Right cardiac atrium (tissue), 5 donors: ENCODE measurements at regions of chr7 and their contacts with region 1.

Region 1: GRCh38 chr7:127253281-127254162 is 781 bp upstream of the GRM8 start:
- DNase-seq: peak; percentile 60 to 88 (median 83)
- ATAC-seq: peak; percentile 91 to 92
- H3K4me3 ChIP-seq: peak overlapping the region; percentile 64
- H3K27ac ChIP-seq: no peak overlapping the region
- H3K4me1 ChIP-seq: no peaks in the 10 kb centered on the region
- H3K27me3 ChIP-seq: no peaks in the 10 kb centered on the region

Region 2: GRCh38 chr7:126803060-126803665 is 450.4 kb before region 1 on chr7:
- intact Hi-C with region 1: loop called in 1 of 4 experiments (anchors 10 kb)
- DNase-seq: peak in 2 of 3 donors; percentile 9 to 14
- ATAC-seq: peak in 1 of 2 donors; percentile 37
- H3K4me3 ChIP-seq: no peak overlapping the region
- H3K27ac ChIP-seq: no peak overlapping the region
- H3K4me1 ChIP-seq: no peaks in the 10 kb centered on the region
- H3K27me3 ChIP-seq: no peaks in the 10 kb centered on the region